MCF 10A (cell line): ENCODE measurements at regions of chr12 and their contacts with region 1.

Region 1: GRCh38 chr12:56286044-56286830 is 13.9 kb downstream of the CS start:
- DNase-seq: no peak
- H3K4me3 Mint-ChIP-seq: no peak overlapping the region
- H3K27ac Mint-ChIP-seq: no peak overlapping the region
- H3K4me1 Mint-ChIP-seq: peaks cover 3% of the 10 kb centered on the region
- H3K27me3 Mint-ChIP-seq: no peaks in the 10 kb centered on the region
- CTCF ChIP-seq: no peak

Region 2: DNA sequence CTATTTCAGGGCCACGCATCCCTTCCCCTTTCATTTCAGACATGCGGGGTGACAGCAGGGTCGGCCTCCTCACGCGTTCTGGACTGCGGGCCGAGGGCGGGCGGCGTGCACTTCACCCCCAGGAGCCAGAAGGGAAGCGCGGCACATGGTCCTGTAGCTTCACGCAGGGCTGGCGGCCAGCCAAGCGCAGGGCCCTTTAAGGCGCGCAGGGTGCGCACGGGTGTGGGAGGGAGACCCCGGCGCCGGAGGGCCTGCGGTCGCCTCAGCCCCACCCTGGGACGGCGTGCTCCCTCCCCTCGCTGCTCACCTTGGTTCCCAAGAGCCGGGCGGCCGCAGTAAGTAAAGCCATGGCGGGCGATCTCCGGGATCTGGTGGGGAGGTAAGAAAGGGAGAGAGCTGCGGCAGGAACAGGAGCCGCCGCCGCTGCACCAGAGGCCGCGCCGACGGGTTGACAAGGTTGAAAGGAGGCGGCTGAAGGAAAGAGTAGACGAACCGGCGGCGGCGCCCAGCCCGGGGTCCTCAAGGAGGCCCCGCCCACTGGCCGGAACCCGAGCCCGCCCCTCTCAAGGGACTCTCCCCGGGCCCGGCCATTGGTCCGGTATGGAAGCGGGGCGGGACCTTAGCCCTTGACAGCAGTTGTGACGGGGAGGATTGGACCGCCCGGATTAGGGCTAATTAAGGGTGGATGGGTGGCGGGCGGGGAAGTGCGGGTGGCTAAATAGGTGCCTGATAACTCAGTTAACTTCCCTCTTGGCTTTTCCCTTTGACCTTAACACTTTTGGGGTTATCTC is 13.8 kb after region 1 on chr12 and contains the start of gene CS:
- CTCF ChIA-PET with region 1: interaction called, 4 read pairs
- POLR2A ChIA-PET with region 1: interaction called, 27 read pairs
- intact Hi-C with region 1: no loop called
- DNase-seq: peak; percentile 99
- H3K4me3 Mint-ChIP-seq: peak within 1 kb of the TSS; percentile 95
- H3K27ac Mint-ChIP-seq: peak within 1 kb of the TSS; percentile 84
- H3K4me1 Mint-ChIP-seq: peaks cover 19% of the 10 kb centered on the region
- H3K27me3 Mint-ChIP-seq: no peaks in the 10 kb centered on the region
- CTCF ChIP-seq: no peak
- total RNA-seq, gene CS: 213 and 257 TPM in 2 replicates